GM18951 (cell line): ENCODE measurements at regions of chr3 and their contacts with region 1.

Region 1: GRCh38 chr3:33074217-33075067 is 22.5 kb downstream of the GLB1 start:
- POLR2A ChIP-seq: no peak

Region 2: DNA sequence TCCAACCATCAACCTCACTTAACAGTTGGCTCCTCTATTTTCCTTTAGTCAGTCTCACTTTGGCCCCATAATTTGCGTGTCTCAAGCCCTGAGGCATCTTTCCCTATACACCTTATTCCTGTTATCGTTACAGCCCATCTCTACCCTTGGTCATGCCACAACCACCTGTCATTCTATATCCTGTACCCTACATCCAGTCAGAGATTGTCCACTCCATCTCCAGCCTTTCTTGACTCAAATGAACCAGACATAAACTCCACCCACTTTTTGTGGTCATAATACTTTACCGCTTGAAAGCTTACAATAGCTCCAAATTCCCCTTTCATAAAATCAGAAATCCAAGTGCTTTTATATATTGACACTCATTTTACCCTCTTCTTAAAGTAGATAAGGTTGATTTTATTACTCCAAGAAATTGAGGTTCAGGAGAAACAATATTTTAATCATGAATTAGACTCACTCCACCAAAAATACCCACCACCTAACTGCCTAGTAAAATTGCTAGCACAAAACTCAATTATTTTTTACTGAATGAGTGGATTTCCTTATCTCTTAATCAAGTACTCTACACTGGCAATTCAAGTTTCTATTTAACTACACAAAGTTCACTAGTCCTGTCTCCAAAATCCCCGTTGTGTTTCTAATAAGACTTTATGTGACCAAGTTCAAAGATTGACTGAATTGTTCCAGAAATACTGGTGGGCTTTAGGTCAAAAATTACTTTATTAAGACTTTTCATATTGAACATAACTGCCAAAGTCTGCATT is 113.9 kb before region 1 on chr3:
- in situ Hi-C with region 1: loop called (anchors 10 kb)
- POLR2A ChIP-seq: no peak

Region 3: DNA sequence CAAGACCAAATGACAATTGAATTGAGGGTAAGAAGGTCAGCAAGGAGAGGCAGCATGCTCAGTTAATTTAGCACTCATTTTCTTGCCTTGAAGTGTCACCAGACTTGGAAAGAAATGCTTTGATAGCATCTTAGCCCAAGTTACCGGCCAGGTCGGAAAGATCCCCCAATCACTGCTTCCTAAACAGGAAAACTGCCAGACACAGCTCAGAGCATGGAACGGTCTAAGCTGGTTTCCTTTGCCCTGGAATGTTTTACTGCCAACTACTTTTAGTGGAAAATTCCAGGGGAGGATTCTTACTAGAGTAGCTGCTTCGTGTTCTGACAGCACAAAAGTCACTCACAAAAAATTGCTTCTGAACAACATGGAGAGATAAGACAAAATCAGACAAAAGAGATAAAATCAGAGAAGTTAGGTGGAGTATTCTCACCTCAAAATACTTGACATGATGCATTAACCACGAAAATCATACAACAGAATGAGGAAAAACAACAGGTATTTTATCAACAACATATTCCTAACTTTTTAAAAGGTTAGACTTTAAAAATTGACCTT is 57.5 kb before region 1 on chr3:
- in situ Hi-C with region 1: no loop called
- POLR2A ChIP-seq: no peak

Region 4: GRCh38 chr3:33231756-33232465 is 157.5 kb after region 1 on chr3:
- in situ Hi-C with region 1: no loop called
- POLR2A ChIP-seq: no peak

Region 5: GRCh38 chr3:33578325-33579177 is 504.1 kb after region 1 on chr3:
- in situ Hi-C with region 1: no loop called
- POLR2A ChIP-seq: no peak